ENCODE measurements at regions of chr10 and their contacts with region 1.

Region 1: DNA sequence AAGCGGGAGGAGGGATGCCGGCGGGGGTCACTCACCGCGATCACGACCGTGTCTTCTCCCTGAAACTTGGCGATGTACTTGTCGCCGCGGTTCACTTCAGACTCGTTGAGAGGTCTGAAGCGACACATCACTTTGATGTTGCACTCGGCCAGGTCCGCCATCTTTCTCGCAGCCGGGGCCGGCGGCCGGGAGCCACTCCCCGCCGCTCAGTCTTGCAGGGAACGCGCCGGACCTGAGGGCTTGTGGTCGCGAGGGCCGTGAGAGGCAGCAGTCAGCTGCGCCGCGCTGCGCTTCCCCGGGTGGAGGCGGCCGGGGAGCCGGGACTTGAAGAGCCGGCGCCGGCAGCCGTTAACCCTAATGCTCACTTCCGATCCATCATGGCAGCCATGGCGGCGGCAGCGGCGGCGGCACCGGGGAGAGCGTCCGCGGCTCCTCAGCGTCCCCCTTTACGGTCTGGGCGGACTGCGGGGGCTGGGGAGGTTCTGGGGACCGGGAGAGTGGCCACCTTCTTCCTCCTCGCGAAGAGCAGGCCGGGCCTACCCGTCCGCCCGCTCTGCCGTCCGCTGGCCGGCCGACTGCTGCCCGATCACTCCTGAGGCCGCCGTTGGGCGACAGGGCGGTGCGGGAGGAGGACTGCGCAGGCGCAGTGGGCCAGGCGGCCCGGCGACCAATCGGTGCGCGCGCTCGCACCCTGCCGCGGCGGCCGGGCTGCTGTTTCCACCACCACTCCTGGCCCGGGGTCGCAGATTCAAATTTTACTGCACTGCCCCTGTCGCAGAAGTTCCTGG is at the start of gene KIF5B:
- DNase-seq: peak; percentile 97
- H3K4me3 Mint-ChIP-seq: peak within 1 kb of the TSS; percentile 92
- H3K27ac Mint-ChIP-seq: peak within 1 kb of the TSS; percentile 96
- H3K4me1 Mint-ChIP-seq: peaks cover 36% of the 10 kb centered on the region
- H3K27me3 Mint-ChIP-seq: no peaks in the 10 kb centered on the region
- total RNA-seq, gene KIF5B: 81.3 and 82.2 TPM in 2 replicates

Region 2: GRCh38 chr10:32041290-32042028 is 14.5 kb before region 1 on chr10:
- intact Hi-C with region 1: loop called (anchors 2 kb)
- DNase-seq: no peak
- H3K4me3 Mint-ChIP-seq: no peak overlapping the region
- H3K27ac Mint-ChIP-seq: peak overlapping the region; percentile 0
- H3K4me1 Mint-ChIP-seq: peaks cover 40% of the 10 kb centered on the region
- H3K27me3 Mint-ChIP-seq: no peaks in the 10 kb centered on the region

Region 3: DNA sequence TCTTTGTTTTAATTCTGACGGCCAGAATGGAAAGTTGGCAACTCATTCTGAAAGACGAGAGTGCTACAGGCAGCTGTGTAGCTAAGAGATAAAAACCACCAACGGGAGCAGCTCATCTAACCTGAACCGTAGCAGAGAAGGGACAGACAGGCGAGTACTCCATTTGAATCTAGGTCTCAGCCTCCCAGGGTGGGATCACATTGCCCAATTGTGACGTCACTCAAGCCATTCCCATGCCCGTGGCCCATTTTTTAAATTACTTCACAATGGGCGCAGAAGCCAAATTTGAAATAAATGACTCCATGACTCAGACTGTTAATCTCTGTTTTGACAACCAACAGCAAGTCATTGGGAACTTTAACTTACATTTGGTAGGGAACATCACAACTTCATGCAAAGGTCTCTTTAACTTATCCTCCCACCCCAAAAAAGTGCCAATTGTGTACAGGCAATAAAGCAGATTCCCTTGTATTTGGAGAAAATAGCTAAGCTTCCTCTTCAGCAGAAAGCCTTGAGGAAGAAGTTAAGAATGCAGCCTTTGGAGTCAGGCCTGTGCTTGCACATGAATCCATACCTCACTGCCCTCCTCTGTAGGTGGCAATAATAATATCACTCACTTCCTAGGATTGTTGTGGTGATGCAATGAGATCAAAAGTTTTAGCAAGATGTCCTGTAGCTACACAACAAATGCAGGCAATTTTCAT is 93.4 kb after region 1 on chr10:
- intact Hi-C with region 1: loop called (anchors 1 kb)
- DNase-seq: peak; percentile 80
- H3K4me3 Mint-ChIP-seq: peak overlapping the region; percentile 76
- H3K27ac Mint-ChIP-seq: peak overlapping the region; percentile 94
- H3K4me1 Mint-ChIP-seq: peaks cover 34% of the 10 kb centered on the region
- H3K27me3 Mint-ChIP-seq: no peaks in the 10 kb centered on the region